Naive thymus-derived CD8-positive, alpha-beta T cell (primary cell): ENCODE measurements at regions of chr2 and their contacts with region 1.

Region 1: DNA sequence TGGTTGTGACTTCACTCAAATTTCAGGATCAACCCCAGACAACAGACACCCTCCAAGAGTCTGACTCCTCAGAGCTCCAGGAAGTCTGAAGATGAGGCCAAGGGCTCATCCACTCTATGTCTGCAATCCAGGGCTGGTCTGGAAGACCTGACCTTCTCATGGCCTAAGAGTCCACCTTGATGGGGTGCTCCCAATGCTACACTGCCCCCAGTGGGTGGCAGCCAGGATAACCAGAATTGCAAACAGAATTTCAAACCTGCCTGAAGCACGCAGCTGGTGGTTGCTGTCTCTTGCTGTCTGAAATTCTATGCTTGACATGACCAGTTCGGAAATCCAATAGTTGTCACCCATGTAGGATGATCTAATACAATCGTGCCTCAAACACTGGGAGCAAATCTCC is 96.0 kb downstream of the UXS1 start:
- DNase-seq: peak in 1 of 10 donors; percentile 9
- ATAC-seq: no peak
- H3K4me3 Mint-ChIP-seq: no peak overlapping the region
- H3K27ac Mint-ChIP-seq: peak overlapping the region; percentile 76 to 99 (median 94)
- H3K4me1 Mint-ChIP-seq: peaks cover 34 to 63% (median 61%) of the 10 kb centered on the region in 4 donors
- H3K27me3 Mint-ChIP-seq: no peaks in the 10 kb centered on the region

Region 2: DNA sequence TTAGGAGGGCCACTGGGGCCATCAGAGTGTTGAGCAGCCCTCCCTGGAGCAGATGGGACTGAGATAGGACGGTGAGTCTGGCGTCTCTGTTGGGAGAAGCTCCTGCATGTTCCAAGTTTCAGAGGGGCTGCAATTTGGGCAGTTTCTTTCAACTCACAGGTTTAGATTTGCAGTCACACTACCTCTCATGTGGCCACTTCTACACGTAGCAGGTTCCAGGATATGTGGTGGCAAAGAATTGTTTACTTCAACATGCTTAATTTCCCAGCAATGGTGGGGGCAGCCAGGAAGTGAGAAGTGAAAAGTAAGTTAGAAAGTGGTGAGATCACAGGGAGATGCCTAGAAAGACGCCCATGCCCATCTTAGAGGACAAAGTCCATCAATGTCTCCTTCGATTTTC is 344.1 kb before region 1 on chr2:
- POLR2A ChIA-PET with region 1: interaction called, 13 read pairs
- DNase-seq: peak in 9 of 10 donors; percentile 41 to 85 (median 71)
- ATAC-seq: peak; percentile 65 to 76
- H3K4me3 Mint-ChIP-seq: peak overlapping the region; percentile 61 to 99 (median 70)
- H3K27ac Mint-ChIP-seq: peak overlapping the region; percentile 82 to 98 (median 93)
- H3K4me1 Mint-ChIP-seq: peaks cover 47 to 100% (median 98%) of the 10 kb centered on the region in 4 donors
- H3K27me3 Mint-ChIP-seq: no peaks in the 10 kb centered on the region

Region 3: DNA sequence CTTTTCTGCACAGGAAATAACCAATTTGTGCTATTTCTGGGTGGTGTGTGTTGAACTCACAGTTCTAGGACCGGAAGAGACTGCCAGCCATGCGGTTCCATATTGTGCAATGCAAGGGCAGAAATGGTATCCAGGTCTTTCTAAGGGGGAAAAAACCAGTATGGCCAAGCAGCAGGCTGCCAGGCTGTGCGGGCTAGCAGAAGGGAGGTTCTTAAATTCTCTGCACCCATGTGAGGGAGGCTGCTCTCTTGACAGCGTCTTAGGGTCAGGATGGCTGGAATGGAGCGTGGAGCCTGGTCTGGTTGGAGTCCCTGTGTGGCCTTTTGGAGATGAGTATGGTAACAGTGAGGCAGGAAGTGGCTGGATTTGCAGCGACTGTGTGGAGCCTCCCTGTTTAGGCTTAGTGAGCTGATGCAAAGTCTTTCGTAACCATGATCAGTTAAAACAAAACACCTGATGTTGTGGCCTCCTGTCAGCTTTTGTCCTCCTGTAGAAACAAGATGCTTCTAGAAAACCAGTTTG is 300.7 kb before region 1 on chr2:
- POLR2A ChIA-PET with region 1: interaction called, 10 read pairs
- DNase-seq: peak in 4 of 10 donors; percentile 20 to 56 (median 54)
- ATAC-seq: peak; percentile 5 to 9
- H3K4me3 Mint-ChIP-seq: peak overlapping the region; percentile 64 to 94 (median 85)
- H3K27ac Mint-ChIP-seq: peak overlapping the region; percentile 96 to 100 (median 98)
- H3K4me1 Mint-ChIP-seq: peaks cover 55 to 96% (median 91%) of the 10 kb centered on the region in 4 donors
- H3K27me3 Mint-ChIP-seq: no peaks in the 10 kb centered on the region

Region 4: GRCh38 chr2:105929516-105929915 is 168.6 kb before region 1 on chr2:
- POLR2A ChIA-PET with region 1: interaction called, 18 read pairs
- DNase-seq: peak in 9 of 10 donors; percentile 9 to 77 (median 54)
- ATAC-seq: peak; percentile 75 to 82
- H3K4me3 Mint-ChIP-seq: peak overlapping the region in 9 of 10 donors; percentile 36 to 82 (median 68)
- H3K27ac Mint-ChIP-seq: peak overlapping the region in 9 of 10 donors; percentile 80 to 96 (median 93)
- H3K4me1 Mint-ChIP-seq: peaks cover 41 to 71% (median 62%) of the 10 kb centered on the region in 4 donors
- H3K27me3 Mint-ChIP-seq: no peaks in the 10 kb centered on the region

Region 5: GRCh38 chr2:106030287-106031268 is 67.5 kb before region 1 on chr2:
- POLR2A ChIA-PET with region 1: no interaction called
- DNase-seq: no peak
- ATAC-seq: no peak
- H3K4me3 Mint-ChIP-seq: no peak overlapping the region
- H3K27ac Mint-ChIP-seq: peak overlapping the region in 3 of 10 donors; percentile 20 to 70 (median 63)
- H3K4me1 Mint-ChIP-seq: peaks cover 17 to 37% (median 29%) of the 10 kb centered on the region in 4 donors
- H3K27me3 Mint-ChIP-seq: no peaks in the 10 kb centered on the region

Region 6: DNA sequence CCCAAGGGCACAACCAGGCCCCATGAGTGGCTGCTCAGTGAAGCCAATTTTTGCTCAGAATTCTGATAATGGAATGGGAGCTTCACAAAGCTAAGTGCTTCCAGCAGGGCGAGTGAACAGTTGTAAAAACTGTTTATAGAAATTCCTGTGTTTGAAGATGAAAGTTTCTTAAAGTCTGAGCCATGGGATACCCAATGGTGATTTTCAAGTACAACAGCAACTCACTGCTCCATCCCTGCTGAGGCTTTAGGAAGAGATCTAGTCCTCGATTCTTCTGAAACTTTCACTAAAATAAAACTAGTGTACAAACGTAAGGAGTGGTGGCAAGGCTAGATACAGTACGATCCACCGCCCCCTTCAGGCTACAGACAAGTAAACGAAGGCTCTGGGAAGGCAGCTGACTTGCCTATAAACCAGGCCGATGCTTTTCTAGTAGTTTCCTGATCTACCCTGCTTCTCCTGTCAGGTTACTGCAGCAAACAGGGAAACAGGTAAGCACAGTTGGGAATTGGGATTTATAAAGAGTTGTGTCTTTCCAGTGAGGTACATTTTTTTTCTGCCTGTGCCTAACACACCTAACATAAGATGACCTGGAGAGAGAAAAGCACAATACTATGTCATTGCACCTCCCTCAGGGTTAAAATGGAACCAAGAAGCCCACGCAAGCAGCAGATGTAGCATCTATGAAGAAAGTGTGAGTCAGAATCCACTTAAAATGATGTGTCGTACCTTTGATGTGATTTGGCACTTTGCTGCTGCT is 12.7 kb before region 1 on chr2:
- POLR2A ChIA-PET with region 1: interaction called, 46 read pairs
- DNase-seq: peak in 9 of 10 donors; percentile 39 to 81 (median 55)
- ATAC-seq: peak; percentile 94 to 96
- H3K4me3 Mint-ChIP-seq: peak overlapping the region; percentile 60 to 82 (median 70)
- H3K27ac Mint-ChIP-seq: peak overlapping the region; percentile 79 to 96 (median 95)
- H3K4me1 Mint-ChIP-seq: peaks cover 44 to 63% (median 63%) of the 10 kb centered on the region in 4 donors
- H3K27me3 Mint-ChIP-seq: no peaks in the 10 kb centered on the region

Region 7: GRCh38 chr2:106160786-106161261 is 62.7 kb after region 1 on chr2:
- POLR2A ChIA-PET with region 1: interaction called, 33 read pairs
- DNase-seq: peak in 9 of 10 donors; percentile 18 to 76 (median 60)
- ATAC-seq: peak; percentile 66 to 72
- H3K4me3 Mint-ChIP-seq: peak overlapping the region; percentile 89 to 99 (median 96)
- H3K27ac Mint-ChIP-seq: peak overlapping the region; percentile 93 to 100 (median 98)
- H3K4me1 Mint-ChIP-seq: peaks cover 46 to 97% (median 89%) of the 10 kb centered on the region in 4 donors
- H3K27me3 Mint-ChIP-seq: peaks cover 0 to 2% (median 0%) of the 10 kb centered on the region in 5 donors